Heart right ventricle (tissue), 16 donors: ENCODE measurements at regions of chr12 and their contacts with region 1.

Region 1: GRCh38 chr12:120265473-120266179 is at the start of gene PXN:
- DNase-seq: peak; percentile 87 to 94
- ATAC-seq: peak; percentile 83 to 92 (median 88)
- H3K4me3 ChIP-seq: peak within 1 kb of the TSS; percentile 84 to 99 (median 94)
- H3K27ac ChIP-seq: peak within 1 kb of the TSS; percentile 90 to 99 (median 96)
- H3K4me1 ChIP-seq: peaks cover 23 to 54% (median 43%) of the 10 kb centered on the region in 9 donors
- H3K27me3 ChIP-seq: no peaks in the 10 kb centered on the region
- CTCF ChIP-seq: peak; percentile 84 to 96 (median 88)
- total RNA-seq, gene PXN: 52.0 to 83.7 (median 63.3) TPM

Region 2: GRCh38 chr12:120199595-120200306 is 65.9 kb before region 1 on chr12:
- intact Hi-C with region 1: loop called in 4 of 10 experiments (anchors 2 kb)
- DNase-seq: no peak
- ATAC-seq: peak in 2 of 8 donors; percentile 20 to 53
- H3K4me3 ChIP-seq: peak overlapping the region; percentile 74 to 98 (median 90)
- H3K27ac ChIP-seq: peak overlapping the region in 9 of 10 donors; percentile 77 to 92 (median 84)
- H3K4me1 ChIP-seq: peaks cover 3 to 60% (median 28%) of the 10 kb centered on the region in 9 donors
- H3K27me3 ChIP-seq: no peaks in the 10 kb centered on the region
- CTCF ChIP-seq: no peak

Region 3: GRCh38 chr12:120216742-120217605 is 48.7 kb before region 1 on chr12:
- intact Hi-C with region 1: no loop called
- DNase-seq: no peak
- ATAC-seq: peak in 1 of 8 donors; percentile 9
- H3K4me3 ChIP-seq: no peak overlapping the region
- H3K27ac ChIP-seq: no peak overlapping the region
- H3K4me1 ChIP-seq: peaks cover 0 to 6% (median 0%) of the 10 kb centered on the region in 9 donors
- H3K27me3 ChIP-seq: no peaks in the 10 kb centered on the region
- CTCF ChIP-seq: no peak

Region 4: GRCh38 chr12:120228291-120229070 is 37.1 kb before region 1 on chr12:
- intact Hi-C with region 1: loop called (anchors 1 to 2 kb)
- DNase-seq: peak; percentile 89 to 90
- ATAC-seq: peak; percentile 60 to 80 (median 72)
- H3K4me3 ChIP-seq: peak overlapping the region in 7 of 10 donors; percentile 1 to 28 (median 21)
- H3K27ac ChIP-seq: peak overlapping the region in 9 of 10 donors; percentile 50 to 96 (median 93)
- H3K4me1 ChIP-seq: peaks cover 65 to 99% (median 92%) of the 10 kb centered on the region in 9 donors
- H3K27me3 ChIP-seq: no peaks in the 10 kb centered on the region
- CTCF ChIP-seq: peak; percentile 84 to 98 (median 96)